Activated T-helper 2 cell treated with anti-CD3 and anti-CD28 coated beads, Interferon-gamma antibody, Interleukin-2, Interleukin-4, amounts not matched to agents 10 μg/mL and 5 μg/mL and 100 μg/mL, durations not matched to agents 14 hours and 24 hours and 36 hours (primary cell): ENCODE measurements at regions of chr21 and their contacts with region 1.

Region 1: GRCh38 chr21:38985568-38986378 is 180.0 kb downstream of the ETS2 start:
- DNase-seq: peak; percentile 72
- H3K4me3 Mint-ChIP-seq: peak overlapping the region; percentile 65
- H3K27ac Mint-ChIP-seq: peak overlapping the region; percentile 97
- H3K4me1 Mint-ChIP-seq: peaks cover 67% of the 10 kb centered on the region
- H3K27me3 Mint-ChIP-seq: no peaks in the 10 kb centered on the region

Region 2: DNA sequence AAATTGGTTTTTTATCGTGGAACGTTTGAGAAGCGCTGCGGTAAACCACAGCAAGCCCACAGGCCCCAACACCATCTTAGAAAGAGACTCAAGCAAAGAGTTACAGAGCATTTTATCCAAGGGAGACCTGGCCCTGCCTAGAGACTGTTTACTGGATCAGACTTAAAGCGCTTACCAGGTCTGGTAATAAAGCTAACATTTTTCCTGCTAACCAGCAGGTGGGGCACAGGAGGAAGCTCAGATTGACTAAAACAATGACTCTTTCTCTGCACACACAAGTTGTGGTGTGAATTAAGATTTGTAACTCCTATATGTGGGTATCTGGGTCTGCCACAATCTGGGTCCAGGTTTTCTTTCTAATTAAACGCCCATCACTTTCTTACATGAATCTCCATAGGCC is 316.6 kb before region 1 on chr21:
- intact Hi-C with region 1: no loop called
- DNase-seq: no peak
- H3K4me3 Mint-ChIP-seq: no peak overlapping the region
- H3K27ac Mint-ChIP-seq: no peak overlapping the region
- H3K4me1 Mint-ChIP-seq: no peaks in the 10 kb centered on the region
- H3K27me3 Mint-ChIP-seq: peaks cover 30% of the 10 kb centered on the region

Region 3: DNA sequence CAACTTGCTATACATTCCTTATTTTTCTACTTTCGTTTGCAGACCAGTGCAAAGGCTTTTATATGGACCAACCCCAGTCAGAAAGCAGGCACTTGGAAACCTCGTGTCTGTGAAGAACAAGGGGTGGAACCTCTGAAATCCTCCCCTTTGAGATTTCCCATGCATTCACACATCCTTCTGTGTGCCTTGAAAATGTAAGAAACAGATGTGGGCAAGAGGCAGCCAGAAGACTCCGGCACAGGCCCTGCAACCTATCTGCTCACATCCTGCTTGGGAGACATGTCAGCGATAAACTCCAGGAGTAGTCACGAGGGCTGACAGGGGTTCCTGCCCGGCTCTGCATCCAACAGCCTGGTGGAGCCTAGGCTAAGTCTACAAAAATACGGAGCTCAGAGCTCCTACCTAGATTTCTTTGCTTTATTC is 137.6 kb before region 1 on chr21:
- intact Hi-C with region 1: no loop called
- DNase-seq: no peak
- H3K4me3 Mint-ChIP-seq: no peak overlapping the region
- H3K27ac Mint-ChIP-seq: no peak overlapping the region
- H3K4me1 Mint-ChIP-seq: peaks cover 11% of the 10 kb centered on the region
- H3K27me3 Mint-ChIP-seq: no peaks in the 10 kb centered on the region

Region 4: GRCh38 chr21:38937844-38938742 is 47.7 kb before region 1 on chr21:
- intact Hi-C with region 1: loop called (anchors 1 kb)
- DNase-seq: peak; percentile 70
- H3K4me3 Mint-ChIP-seq: peak overlapping the region; percentile 65
- H3K27ac Mint-ChIP-seq: peak overlapping the region; percentile 96
- H3K4me1 Mint-ChIP-seq: peaks cover 34% of the 10 kb centered on the region
- H3K27me3 Mint-ChIP-seq: no peaks in the 10 kb centered on the region

Region 5: GRCh38 chr21:38958940-38959691 is 26.7 kb before region 1 on chr21:
- intact Hi-C with region 1: loop called (anchors 1 kb)
- DNase-seq: no peak
- H3K4me3 Mint-ChIP-seq: peak overlapping the region; percentile 61
- H3K27ac Mint-ChIP-seq: peak overlapping the region; percentile 96
- H3K4me1 Mint-ChIP-seq: peaks cover 64% of the 10 kb centered on the region
- H3K27me3 Mint-ChIP-seq: no peaks in the 10 kb centered on the region

Region 6: GRCh38 chr21:39004634-39005501 is 19.1 kb after region 1 on chr21:
- intact Hi-C with region 1: loop called (anchors 1 kb)
- DNase-seq: no peak
- H3K4me3 Mint-ChIP-seq: peak overlapping the region; percentile 59
- H3K27ac Mint-ChIP-seq: peak overlapping the region; percentile 96
- H3K4me1 Mint-ChIP-seq: peaks cover 51% of the 10 kb centered on the region
- H3K27me3 Mint-ChIP-seq: no peaks in the 10 kb centered on the region

Region 7: DNA sequence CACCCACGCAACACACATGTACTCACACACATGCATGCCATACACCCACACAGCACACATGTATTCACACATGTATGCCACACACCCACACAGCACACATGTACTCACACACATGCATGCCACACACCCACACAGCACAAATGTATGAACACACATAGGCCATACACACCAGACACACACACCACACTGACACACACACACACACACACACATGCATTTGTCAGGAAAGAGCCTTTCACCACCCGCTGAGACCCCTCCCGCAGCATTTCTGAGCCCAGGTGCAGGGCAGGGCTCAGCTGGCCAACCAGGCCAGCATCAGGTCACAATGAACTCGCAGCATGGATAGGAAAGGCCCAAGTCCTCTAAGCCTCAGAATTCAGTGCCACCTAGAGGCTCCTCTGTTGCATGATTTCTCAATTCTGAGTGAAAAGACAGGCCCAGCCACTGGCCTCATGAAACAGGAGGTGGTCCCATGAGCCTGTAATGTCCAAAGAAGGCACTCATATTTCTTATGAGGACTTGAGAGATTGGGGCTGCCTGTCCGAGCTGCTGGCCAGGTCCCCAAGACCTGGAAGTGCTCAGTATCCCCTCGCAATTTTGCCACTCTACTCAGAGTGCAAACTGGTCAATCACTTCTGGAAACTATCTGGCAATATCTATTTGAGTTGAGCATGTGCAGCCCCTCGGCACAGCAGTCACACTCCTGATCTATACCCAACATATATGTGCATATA is 140.1 kb after region 1 on chr21:
- intact Hi-C with region 1: loop called (anchors 10 kb)
- DNase-seq: no peak
- H3K4me3 Mint-ChIP-seq: no peak overlapping the region
- H3K27ac Mint-ChIP-seq: no peak overlapping the region
- H3K4me1 Mint-ChIP-seq: peaks cover 14% of the 10 kb centered on the region
- H3K27me3 Mint-ChIP-seq: peaks cover 19% of the 10 kb centered on the region